Activated CD4-positive, alpha-beta memory T cell treated with anti-CD3 and anti-CD28 coated beads for 36 hours (primary cell): ENCODE measurements at regions of chr15 and their contacts with region 1.

Region 1: GRCh38 chr15:56732921-56733797 is at the start of gene ZNF280D:
- DNase-seq: peak; percentile 85
- H3K4me3 Mint-ChIP-seq: peak within 1 kb of the TSS; percentile 93
- H3K27ac Mint-ChIP-seq: peak within 1 kb of the TSS; percentile 93
- H3K4me1 Mint-ChIP-seq: peaks cover 32% of the 10 kb centered on the region
- H3K27me3 Mint-ChIP-seq: no peaks in the 10 kb centered on the region
- total RNA-seq, gene ZNF280D: 18.0 to 19.3 TPM

Region 2: GRCh38 chr15:56886932-56887781 is 154.0 kb after region 1 on chr15:
- CTCF ChIA-PET with region 1: no interaction called
- POLR2A ChIA-PET with region 1: no interaction called
- intact Hi-C with region 1: loop called (anchors 2 kb)
- DNase-seq: peak; percentile 87
- H3K4me3 Mint-ChIP-seq: peak overlapping the region; percentile 77
- H3K27ac Mint-ChIP-seq: peak overlapping the region; percentile 81
- H3K4me1 Mint-ChIP-seq: peaks cover 26% of the 10 kb centered on the region
- H3K27me3 Mint-ChIP-seq: no peaks in the 10 kb centered on the region